Activated T-helper 2 cell treated with anti-CD3 and anti-CD28 coated beads, Interferon-gamma antibody, Interleukin-2, Interleukin-4, amounts not matched to agents 10 μg/mL and 5 μg/mL and 100 μg/mL, durations not matched to agents 14 hours and 24 hours and 36 hours (primary cell): ENCODE measurements at regions of chrX and their contacts with region 1.

Region 1: DNA sequence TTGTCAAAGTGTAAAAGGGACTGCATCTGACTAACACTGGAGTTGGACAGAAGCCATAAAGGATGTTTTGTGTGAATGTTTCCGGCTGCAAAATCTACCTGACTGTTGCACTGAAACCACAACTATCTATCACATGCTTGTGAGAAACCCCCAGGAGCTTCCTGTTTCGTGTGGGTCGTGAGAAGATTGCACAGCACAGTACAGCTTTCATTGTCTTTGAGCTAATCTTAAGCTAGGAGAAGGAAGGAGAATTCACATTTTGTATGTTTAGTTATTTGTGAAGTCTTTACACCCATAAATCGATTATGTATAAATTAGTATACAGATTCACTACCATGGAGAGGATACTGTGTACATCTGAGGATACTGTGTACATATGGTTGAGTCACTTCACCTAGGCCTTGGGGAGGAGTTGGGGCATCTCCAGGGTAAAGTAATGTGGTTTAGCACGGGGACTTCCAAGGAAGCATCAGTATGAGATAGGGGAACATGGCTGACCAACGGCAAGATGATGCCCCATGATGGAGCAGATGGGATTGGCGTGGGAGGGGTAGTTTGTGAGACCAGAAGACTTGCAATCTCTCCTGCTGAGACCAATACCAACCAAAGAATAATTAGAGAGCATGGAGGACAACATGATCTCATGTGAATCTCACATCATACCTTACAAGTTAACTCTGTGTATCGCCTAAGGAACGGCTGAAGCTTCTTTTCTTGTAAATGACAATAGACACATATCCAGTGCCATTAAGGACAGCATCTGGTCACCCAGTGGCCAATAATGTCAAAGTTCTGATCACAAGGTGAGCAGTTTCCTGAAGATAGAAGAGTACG is 43.1 kb upstream of the FAM9C start:
- DNase-seq: peak; percentile 61
- H3K4me3 Mint-ChIP-seq: peak overlapping the region; percentile 82
- H3K27ac Mint-ChIP-seq: peak overlapping the region; percentile 100
- H3K4me1 Mint-ChIP-seq: peaks cover 69% of the 10 kb centered on the region
- H3K27me3 Mint-ChIP-seq: no peaks in the 10 kb centered on the region

Region 2: DNA sequence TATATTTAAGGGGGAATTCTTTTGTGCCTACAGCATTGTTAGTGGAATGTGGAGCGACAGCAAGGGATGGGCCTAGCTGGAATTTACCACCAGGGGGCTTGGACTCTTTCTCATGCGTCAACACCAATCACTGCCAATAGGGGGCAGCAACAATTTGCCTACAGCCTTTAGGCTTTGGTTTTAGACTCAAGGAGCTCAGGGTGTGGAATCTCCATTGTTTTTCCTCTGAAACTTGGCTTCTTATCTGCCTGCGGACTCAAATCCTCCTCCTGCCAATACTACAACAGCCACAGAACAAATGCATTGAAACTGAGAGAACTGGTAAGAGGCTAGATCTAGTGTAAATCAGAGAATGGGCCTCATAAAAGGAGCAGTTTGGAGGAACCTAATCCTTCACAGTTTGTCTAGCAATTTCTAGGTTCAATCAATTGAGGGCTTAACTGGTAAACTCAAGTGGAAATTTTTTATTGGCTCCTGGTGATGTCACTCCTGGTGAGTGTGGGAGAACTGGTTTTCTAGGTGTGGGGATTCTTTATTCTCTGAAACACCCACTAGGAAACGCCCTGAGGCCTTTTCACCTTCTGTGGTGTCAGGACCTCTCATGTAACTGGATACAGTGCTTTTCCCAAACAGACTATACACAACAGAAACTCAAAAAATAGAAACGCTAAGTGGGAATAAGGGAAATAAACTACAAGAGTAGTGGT is 140.5 kb before region 1 on chrX:
- intact Hi-C with region 1: loop called (anchors 1 kb)
- DNase-seq: peak; percentile 64
- H3K4me3 Mint-ChIP-seq: peak overlapping the region; percentile 30
- H3K27ac Mint-ChIP-seq: peak overlapping the region; percentile 87
- H3K4me1 Mint-ChIP-seq: peaks cover 56% of the 10 kb centered on the region
- H3K27me3 Mint-ChIP-seq: no peaks in the 10 kb centered on the region

Region 3: DNA sequence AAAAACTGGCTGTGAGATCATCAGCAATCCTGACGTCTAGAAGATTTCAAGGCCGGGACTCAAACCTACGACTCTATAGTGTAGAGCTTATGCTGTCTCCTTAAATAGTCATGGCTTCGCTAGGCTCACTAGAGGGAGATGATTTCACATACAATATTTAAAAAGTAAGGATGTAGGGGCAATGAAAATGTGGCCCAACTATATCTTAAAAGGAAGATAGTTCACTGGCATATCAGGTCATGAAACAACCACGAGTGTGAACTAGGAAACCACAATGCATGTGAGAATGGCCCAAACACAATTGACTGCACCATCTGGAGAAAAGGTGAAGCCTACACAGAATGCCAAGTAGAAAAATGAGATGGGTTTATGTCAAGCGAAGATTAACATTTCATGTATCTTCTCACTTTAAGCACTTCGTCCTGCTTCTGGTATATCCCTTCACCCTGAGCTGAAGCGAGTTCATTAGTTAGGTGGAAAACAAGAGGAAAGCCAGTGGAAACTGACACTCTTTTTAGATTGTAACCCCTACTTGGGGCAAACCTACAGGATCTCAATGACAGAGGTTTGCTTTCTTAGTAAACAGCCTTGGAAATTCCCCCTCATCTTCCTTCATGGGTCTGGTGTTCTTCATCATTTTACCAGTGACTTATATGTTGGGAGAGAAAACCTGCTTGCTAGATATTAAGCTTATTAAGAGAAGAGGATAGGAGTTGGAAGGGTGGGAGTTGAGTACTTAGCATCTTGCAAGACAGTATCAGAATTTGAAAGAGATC is 60.5 kb before region 1 on chrX:
- intact Hi-C with region 1: loop called (anchors 2 kb)
- DNase-seq: no peak
- H3K4me3 Mint-ChIP-seq: no peak overlapping the region
- H3K27ac Mint-ChIP-seq: peak overlapping the region; percentile 72
- H3K4me1 Mint-ChIP-seq: peaks cover 67% of the 10 kb centered on the region
- H3K27me3 Mint-ChIP-seq: no peaks in the 10 kb centered on the region

Region 4: DNA sequence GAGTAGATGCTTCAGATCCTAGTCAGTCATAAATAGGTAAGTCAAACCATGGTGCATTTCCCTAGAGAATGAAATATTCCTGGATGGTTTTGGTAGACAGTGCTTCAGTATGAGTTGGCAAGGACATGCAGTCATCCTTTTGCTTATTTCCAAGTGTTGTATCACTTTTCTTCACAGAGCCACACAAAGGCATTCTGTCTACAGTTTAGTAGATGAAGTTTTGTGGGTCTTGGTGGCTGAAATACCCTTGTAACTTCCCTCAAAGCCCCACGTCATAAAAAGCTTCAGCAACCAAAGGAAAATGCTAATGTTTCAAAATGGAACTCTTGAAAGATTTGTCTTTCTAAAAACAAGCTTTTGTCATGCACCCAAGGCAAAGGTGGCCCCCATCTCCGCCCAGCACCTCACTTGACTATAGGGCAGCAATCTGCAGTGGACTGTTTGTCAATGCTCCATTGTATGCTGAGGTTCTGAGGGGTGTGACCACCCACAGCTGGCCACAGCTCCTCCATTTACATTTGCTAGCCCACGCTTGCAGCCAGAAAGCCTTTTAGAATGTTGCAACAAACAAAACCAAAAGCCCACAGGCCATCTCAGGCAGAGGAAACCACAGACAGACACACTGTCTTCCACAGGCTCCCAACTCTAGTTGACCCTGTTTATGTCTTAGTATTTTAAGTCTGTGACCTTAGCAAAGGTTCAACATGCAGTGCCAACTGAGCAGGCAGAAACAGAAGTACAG is 44.0 kb after region 1 on chrX:
- intact Hi-C with region 1: loop called (anchors 5 kb)
- DNase-seq: no peak
- H3K4me3 Mint-ChIP-seq: no peak overlapping the region
- H3K27ac Mint-ChIP-seq: peak overlapping the region; percentile 42
- H3K4me1 Mint-ChIP-seq: peaks cover 29% of the 10 kb centered on the region
- H3K27me3 Mint-ChIP-seq: no peaks in the 10 kb centered on the region

Region 5: GRCh38 chrX:13142891-13143290 is 55.4 kb after region 1 on chrX:
- intact Hi-C with region 1: no loop called
- DNase-seq: no peak
- H3K4me3 Mint-ChIP-seq: no peak overlapping the region
- H3K27ac Mint-ChIP-seq: no peak overlapping the region
- H3K4me1 Mint-ChIP-seq: peaks cover 5% of the 10 kb centered on the region
- H3K27me3 Mint-ChIP-seq: no peaks in the 10 kb centered on the region

Region 6: DNA sequence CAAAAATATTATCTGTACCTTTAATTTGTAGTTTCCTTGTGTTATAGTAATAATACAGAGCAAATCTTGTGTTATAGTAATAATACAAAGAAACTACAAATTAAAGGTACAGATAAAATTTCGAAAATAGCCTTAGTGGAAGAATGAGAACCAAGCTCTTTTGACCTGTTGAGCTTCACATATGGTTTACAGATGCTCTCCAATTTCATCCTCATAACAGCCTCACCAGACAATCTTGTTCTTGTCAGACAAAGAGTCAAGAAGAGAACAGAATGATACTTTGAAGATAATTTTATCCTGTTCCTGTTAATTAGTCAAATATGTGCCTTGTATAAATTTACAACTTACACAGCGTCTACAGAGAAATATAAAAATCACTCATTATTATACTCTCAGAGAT is 219.5 kb after region 1 on chrX:
- intact Hi-C with region 1: no loop called
- DNase-seq: no peak
- H3K4me3 Mint-ChIP-seq: no peak overlapping the region
- H3K27ac Mint-ChIP-seq: no peak overlapping the region
- H3K4me1 Mint-ChIP-seq: peaks cover 11% of the 10 kb centered on the region
- H3K27me3 Mint-ChIP-seq: no peaks in the 10 kb centered on the region

Region 7: DNA sequence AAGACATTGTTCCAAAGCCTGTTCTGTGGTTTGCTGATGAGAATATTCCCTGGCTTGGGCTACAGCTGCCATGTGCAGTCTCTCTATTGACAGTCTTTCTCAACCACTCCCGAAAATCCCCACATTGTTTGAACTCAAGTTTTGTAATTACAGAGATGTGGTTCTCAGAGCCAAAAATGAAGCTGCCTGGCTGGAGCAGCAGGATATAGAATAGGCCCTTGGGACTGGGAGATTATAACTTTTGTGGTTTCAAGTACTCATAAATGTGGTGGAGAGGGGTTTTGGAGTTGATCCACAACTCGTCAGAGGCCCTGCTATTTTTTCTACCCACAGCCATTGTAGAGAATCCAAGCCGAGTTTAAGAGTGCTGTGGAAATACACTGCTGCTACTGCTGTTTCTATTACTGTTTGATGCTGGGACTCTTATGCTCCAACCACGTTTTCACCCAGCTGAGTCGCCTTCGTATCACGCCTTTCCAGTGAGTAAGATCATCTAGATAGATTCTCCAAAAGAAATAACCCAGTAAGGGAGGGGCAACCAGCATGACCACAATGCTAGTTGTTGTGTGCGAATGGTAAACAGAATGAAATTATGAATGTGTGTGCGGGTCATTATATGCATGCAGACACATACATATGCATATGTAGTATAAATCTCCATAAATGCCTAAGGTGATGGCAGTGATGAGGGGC is 289.5 kb after region 1 on chrX:
- intact Hi-C with region 1: loop called (anchors 2 kb)
- DNase-seq: no peak
- H3K4me3 Mint-ChIP-seq: no peak overlapping the region
- H3K27ac Mint-ChIP-seq: peak overlapping the region; percentile 11
- H3K4me1 Mint-ChIP-seq: peaks cover 36% of the 10 kb centered on the region
- H3K27me3 Mint-ChIP-seq: no peaks in the 10 kb centered on the region

Region 8: DNA sequence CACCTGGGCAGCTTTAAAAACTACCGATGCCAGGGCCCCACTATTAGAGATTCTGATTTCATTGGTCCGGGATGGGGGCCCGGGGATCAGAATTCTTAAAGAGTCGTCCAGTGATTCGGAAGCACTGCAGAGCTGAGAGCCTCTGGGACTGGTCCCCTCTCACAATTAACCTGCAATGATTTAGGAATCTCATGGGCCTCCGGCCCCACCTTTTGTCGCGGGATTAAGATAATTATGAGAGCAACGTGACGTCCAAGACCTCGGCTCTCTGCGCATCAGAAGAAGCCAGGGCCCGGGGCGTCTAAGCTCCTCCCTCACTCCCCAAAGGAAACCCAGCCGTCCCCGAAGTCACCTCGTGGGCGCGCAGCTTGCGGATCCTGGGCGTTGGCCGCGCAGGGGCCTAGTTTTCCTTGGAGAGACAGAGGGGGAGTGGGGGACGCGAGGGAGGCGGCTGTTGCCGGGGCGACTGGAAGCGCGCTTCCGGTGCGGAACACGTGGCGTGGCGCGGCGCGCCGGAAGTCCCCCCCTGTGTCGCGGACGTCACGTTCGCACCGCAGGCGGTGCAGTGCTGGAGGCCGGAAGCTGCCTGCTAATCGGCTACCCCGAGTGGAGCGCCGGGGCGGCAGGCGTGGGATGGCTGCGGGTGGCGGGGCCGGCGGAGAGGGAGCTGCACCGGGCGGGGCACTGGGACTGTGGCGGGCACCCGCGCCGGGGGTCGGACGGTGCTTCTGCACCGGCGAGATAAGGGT is 942.1 kb after region 1 on chrX and contains the start of gene GEMIN8:
- intact Hi-C with region 1: loop called (anchors 5 kb)
- DNase-seq: peak; percentile 79
- H3K4me3 Mint-ChIP-seq: peak within 1 kb of the TSS; percentile 98
- H3K27ac Mint-ChIP-seq: peak within 1 kb of the TSS; percentile 98
- H3K4me1 Mint-ChIP-seq: peaks cover 22% of the 10 kb centered on the region
- H3K27me3 Mint-ChIP-seq: peaks cover 4% of the 10 kb centered on the region
- total RNA-seq, gene GEMIN8: 12.6 and 14.0 TPM in 2 replicates